ENCODE measurements at regions of chr2 and their contacts with region 1.

Region 1: DNA sequence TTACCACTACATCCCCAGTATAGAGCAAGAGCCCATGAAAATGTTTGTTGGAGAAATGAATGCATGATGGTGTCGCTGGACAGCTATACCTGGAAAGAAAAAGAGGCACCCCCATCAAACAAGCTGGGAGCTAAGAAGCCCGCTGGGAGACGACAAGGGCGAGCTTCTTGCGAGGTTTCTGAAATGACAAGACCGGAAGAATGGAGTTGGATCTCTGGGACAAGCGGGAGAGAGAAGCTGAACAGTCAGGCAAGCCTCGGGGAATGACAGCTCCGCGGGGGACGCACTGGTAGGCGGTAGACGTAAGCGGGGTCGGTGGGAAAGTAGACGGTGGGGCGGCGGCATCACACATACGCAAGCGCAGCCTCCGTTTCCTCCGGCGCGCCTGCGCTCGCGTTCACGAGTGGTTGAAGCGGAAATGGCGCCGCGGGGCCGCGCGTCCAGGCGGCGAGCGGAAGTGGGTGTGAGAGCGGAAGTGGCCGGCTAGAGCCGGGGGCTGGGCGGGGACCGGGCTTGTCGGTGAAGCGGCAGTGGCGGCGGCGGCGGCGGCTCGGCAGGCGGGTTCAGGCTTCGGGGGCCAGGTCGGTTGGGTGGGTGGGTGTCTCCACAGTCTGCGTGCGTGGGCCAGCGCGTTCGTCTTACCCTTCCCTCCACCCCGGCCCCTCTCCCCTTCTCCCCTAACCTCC is at the start of gene ARPC2:
- DNase-seq: peak; percentile 97
- H3K4me3 ChIP-seq: peak within 1 kb of the TSS; percentile 90
- H3K27ac ChIP-seq: peak within 1 kb of the TSS; percentile 92
- H3K4me1 ChIP-seq: peaks cover 32% of the 10 kb centered on the region
- CTCF ChIP-seq: no peak
- total RNA-seq, gene ARPC2: 257 and 264 TPM in 2 replicates

Region 2: DNA sequence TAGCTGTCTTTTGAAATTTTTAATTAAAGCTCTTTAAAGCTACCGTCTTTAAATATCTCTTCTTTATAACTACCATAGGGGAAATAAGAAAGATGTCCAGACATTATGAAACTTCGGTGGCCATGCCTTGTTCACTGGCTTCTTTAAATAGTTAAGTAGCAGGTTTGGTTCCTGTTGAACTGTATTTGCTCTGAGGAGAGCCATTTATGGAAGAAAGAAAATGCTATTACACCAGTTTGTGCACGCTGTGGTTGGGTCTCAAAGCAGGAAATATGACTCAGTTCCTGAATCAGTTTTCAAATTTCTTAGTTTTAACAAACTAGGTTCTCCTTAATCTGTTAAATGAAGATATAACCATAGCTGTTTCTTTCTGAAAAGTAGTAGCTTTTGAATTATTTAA is 12.4 kb after region 1 on chr2:
- CTCF ChIA-PET with region 1: interaction called, 5 read pairs
- POLR2A ChIA-PET with region 1: interaction called, 143 read pairs
- intact Hi-C with region 1: loop called (anchors 1 kb)
- DNase-seq: peak; percentile 72
- H3K4me3 ChIP-seq: peak overlapping the region; percentile 9
- H3K27ac ChIP-seq: peak overlapping the region; percentile 83
- H3K4me1 ChIP-seq: peaks cover 52% of the 10 kb centered on the region
- CTCF ChIP-seq: no peak

Region 3: DNA sequence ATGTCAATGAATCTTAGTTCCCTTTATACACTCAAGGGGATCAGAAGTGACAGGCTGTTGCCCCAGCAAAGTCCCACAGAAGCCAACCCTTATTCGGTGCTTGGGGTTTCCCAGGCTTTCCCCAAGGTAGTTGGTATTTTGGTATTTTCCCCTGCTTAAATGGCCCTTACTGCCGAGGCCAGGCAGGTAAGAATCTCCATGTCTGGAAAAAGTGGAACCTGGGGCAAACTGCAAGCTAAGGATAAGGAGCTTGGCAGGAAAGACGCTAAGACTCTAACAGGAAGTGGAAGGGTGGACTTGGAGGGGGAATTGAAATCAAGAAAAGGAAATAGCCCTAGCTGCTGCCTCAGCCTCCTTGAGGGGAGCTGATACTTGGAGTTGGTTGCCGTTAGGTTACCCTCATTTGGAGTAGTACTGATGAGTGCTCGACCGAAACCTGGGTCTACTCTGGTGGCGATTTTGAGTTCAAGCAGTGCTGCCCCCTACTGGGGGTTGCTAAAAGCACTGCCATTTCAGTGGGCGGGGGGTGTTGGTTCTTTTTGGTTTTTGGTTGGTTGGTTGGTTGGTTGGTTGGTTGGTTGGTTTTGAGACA is 40.7 kb after region 1 on chr2:
- CTCF ChIA-PET with region 1: interaction called, 5 read pairs
- POLR2A ChIA-PET with region 1: interaction called, 4 read pairs
- intact Hi-C with region 1: loop called (anchors 2 kb)
- DNase-seq: peak; percentile 84
- H3K4me3 ChIP-seq: no peak overlapping the region
- H3K27ac ChIP-seq: peak overlapping the region; percentile 71
- H3K4me1 ChIP-seq: peaks cover 46% of the 10 kb centered on the region
- CTCF ChIP-seq: peak; percentile 81

Region 4: DNA sequence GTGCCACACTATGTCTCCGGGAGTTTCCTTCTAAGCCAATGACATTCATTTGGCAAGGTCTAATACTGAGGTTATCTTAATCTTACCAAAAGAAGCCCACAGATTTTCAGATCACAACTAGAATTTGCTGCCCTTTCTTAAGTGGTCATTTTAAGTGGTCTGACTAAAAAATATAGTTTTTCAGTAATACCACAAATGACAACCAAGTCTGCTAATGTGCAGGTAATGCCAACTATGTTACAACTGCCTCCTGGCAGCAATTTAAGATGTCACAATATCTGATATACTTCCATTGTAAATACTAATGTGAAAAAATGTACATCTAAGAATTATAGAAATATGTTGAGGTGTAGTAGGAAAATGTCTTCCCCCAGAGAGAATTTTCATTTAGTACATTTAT is 302.1 kb after region 1 on chr2:
- CTCF ChIA-PET with region 1: no interaction called
- POLR2A ChIA-PET with region 1: no interaction called
- intact Hi-C with region 1: no loop called
- DNase-seq: no peak
- H3K4me3 ChIP-seq: no peak overlapping the region
- H3K27ac ChIP-seq: no peak overlapping the region
- H3K4me1 ChIP-seq: no peaks in the 10 kb centered on the region
- CTCF ChIP-seq: no peak

Region 5: DNA sequence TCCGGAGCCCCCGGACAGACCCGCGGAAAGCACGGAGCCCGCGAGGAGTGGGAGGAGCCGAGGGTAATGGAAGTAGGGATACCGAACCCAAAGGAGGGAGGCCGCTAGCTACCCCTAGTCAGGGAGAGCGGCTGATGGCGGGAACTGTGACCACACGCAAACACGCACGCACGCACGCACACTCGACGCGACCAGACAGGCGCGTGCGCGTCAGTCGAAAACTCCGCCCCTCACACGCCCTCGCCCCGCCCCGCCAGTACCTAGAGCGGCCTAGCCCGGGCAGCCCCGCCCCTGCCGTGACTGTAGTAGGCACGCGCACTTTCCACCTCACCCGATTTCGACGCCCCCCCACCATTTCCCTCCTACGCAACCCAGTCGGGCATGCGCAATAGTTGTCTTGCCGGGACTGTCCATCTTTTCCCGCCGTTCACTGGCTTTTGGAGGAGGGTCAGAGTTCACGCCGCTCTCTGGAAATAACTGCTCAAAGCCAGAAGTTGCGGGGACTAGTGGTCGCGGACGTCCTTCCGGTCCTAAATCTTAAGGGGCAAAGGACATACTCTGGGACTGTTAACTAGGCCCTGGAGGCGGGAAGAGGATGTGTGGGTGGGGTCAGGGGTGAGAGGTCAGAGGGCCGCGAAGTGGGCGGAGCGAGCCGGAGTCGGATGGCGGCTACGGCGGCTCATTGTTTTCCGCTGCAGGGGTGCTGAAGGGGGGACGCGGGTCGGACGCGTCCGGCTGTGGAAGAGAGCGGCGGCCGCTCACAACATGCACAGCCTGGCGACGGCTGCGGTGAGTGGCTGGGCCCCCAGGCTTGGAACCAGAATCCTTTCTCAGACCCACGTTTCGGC is 351.6 kb after region 1 on chr2 and contains the starts of genes CNOT9 and USP37:
- CTCF ChIA-PET with region 1: no interaction called
- POLR2A ChIA-PET with region 1: no interaction called
- intact Hi-C with region 1: loop called (anchors 5 kb)
- DNase-seq: peak; percentile 99
- H3K4me3 ChIP-seq: peak within 1 kb of the TSS; percentile 93
- H3K27ac ChIP-seq: peak within 1 kb of the TSS; percentile 89
- H3K4me1 ChIP-seq: peaks cover 31% of the 10 kb centered on the region
- CTCF ChIP-seq: no peak
- total RNA-seq, gene CNOT9: 67.8 and 71.6 TPM in 2 replicates
- total RNA-seq, gene USP37: 23.3 and 31.4 TPM in 2 replicates

Measured in OCI-LY7 (cell line).